ENCODE measurements at regions of chr9 and their contacts with region 1.

Region 1: DNA sequence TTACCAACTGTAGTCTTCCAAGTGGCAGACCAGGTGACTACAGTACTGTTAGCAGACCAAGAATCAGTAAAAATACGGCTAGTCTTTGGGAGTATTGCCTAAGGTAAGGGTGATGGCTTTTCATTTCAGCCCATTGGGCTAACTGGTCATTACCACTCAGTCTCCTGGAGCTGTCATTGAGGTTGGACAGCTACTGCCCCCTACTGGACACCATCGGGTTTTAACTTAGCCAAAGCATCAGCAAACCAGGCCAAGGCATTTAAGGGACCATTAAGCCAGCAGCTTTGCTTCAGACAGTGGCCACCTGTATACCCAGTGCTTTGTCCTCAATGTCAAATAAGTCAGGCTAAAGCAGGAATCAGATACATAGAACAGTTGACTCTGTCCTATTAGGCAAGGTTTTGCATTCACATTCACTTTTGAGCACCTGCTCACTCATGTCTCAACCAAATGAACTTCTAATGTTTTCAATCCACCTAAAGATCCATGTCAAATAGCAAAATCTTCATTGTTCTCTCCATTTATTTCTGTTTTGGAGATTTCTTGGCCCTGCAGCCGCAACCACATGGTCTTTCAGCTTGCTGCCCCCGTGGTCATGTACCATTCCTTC is 117.2 kb downstream of the INVS start:
- DNase-seq: peak; percentile 61
- H3K4me3 ChIP-seq: no peak overlapping the region
- H3K27ac ChIP-seq: no peak overlapping the region
- H3K4me1 ChIP-seq: no peaks in the 10 kb centered on the region
- H3K27me3 ChIP-seq: no peaks in the 10 kb centered on the region
- CTCF ChIP-seq: peak; percentile 72 to 76
- POLR2A ChIP-seq: no peak

Region 2: DNA sequence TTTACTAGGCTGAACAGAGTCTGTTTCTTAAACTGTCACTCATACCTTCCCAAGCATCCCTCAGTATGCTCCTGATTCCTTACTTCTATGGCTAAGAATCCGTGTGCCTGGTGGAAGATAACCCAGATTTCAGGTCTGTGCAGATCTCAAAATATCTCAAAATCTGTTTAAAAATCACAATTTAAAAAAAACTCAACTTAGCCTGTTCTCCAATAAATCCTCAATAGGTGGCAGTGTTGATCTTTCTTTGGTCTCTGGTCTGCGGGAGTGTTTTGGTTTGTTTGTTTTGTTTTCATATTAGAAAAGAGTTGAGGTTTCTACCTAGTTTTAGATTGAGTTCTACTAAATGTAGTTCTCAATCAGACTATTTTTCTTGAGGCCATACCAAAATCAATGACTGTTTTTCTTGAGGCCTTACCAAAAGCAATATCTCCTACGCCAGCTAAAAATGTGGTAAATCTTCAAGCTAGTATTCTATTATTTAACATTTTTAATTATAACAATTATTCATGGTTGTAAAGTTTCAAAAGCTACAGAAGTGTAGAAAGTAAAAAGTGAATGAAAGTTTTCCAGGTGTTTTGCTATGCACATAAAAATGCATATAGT is 1053.4 kb before region 1 on chr9:
- CTCF ChIA-PET with region 1: no interaction called
- POLR2A ChIA-PET with region 1: no interaction called
- dilution Hi-C with region 1: no loop called
- intact Hi-C with region 1: loop called (anchors 5 kb)
- DNase-seq: peak; percentile 62
- H3K4me3 ChIP-seq: no peak overlapping the region
- H3K27ac ChIP-seq: no peak overlapping the region
- H3K4me1 ChIP-seq: peaks cover 3% of the 10 kb centered on the region
- H3K27me3 ChIP-seq: peaks cover 2 to 7% of the 10 kb centered on the region in 2 experiments
- CTCF ChIP-seq: peak; percentile 43 to 44
- POLR2A ChIP-seq: no peak

Region 3: DNA sequence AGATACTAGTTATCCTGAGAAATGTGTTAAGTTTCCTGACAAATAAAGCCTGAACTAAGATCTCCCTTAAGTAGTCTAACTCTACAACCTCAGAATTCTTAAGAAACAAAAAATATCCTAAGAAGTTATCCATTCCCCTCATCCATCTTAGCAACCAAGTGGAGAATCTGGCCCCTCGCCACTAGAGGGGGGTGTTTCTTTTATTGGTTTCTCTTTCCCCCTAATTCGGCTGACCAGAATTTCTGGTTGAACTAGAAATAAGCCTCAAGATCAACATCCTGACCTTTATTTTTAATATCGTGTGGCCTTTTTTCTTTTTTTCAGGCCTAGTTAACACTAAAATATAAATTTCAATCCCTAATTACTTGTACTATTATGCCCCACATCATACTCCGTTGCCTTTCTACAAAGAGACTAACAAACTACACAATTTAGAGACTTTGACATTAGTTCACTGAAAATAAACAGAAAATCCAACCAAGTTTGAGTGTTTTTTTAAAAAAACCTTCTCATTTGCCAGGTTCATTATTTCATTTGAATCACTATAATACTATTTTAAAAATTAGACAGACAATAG is 408.9 kb before region 1 on chr9:
- CTCF ChIA-PET with region 1: no interaction called
- POLR2A ChIA-PET with region 1: no interaction called
- dilution Hi-C with region 1: no loop called
- intact Hi-C with region 1: loop called (anchors 2 kb)
- DNase-seq: peak; percentile 61
- H3K4me3 ChIP-seq: no peak overlapping the region
- H3K27ac ChIP-seq: no peak overlapping the region
- H3K4me1 ChIP-seq: no peaks in the 10 kb centered on the region
- H3K27me3 ChIP-seq: no peaks in the 10 kb centered on the region
- CTCF ChIP-seq: peak; percentile 70 to 72
- POLR2A ChIP-seq: no peak

Region 4: GRCh38 chr9:100134731-100135130 is 81.6 kb before region 1 on chr9:
- CTCF ChIA-PET with region 1: no interaction called
- POLR2A ChIA-PET with region 1: no interaction called
- dilution Hi-C with region 1: no loop called
- intact Hi-C with region 1: loop called (anchors 5 kb)
- DNase-seq: no peak
- H3K4me3 ChIP-seq: no peak overlapping the region
- H3K27ac ChIP-seq: no peak overlapping the region
- H3K4me1 ChIP-seq: no peaks in the 10 kb centered on the region
- H3K27me3 ChIP-seq: no peaks in the 10 kb centered on the region
- CTCF ChIP-seq: no peak
- POLR2A ChIP-seq: no peak

Region 5: DNA sequence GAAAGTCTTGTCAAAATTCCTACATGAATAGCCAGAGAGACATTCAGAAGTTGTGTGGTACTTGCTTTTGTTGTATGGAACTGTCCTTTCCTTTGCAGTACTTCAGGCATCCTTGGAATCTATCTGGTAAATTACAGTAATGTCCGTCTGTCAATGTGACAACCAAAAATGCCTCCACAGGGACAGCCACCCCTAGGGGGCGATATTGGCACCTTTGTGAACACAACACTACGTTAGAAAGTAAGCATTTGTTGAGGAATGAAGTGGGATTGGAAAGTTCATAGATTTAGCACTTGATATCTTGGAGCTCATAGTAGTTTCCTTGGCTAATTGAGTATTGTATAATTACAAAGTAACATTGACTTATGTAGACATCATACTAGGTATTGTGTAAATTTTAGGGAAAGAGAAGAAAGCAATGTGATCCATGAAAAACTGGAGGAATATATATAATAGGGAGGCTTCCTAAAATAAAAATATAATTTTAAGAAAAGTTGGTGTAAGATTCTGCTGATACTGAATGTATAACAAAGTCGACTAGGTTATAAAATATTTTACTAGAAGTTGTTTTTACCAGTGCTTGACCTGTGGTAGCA is 289.4 kb after region 1 on chr9:
- CTCF ChIA-PET with region 1: no interaction called
- POLR2A ChIA-PET with region 1: no interaction called
- dilution Hi-C with region 1: no loop called
- intact Hi-C with region 1: no loop called
- DNase-seq: peak; percentile 61
- H3K4me3 ChIP-seq: no peak overlapping the region
- H3K27ac ChIP-seq: no peak overlapping the region
- H3K4me1 ChIP-seq: peaks cover 8% of the 10 kb centered on the region
- H3K27me3 ChIP-seq: no peaks in the 10 kb centered on the region
- CTCF ChIP-seq: peak; percentile 65 to 78
- POLR2A ChIP-seq: no peak

Region 6: DNA sequence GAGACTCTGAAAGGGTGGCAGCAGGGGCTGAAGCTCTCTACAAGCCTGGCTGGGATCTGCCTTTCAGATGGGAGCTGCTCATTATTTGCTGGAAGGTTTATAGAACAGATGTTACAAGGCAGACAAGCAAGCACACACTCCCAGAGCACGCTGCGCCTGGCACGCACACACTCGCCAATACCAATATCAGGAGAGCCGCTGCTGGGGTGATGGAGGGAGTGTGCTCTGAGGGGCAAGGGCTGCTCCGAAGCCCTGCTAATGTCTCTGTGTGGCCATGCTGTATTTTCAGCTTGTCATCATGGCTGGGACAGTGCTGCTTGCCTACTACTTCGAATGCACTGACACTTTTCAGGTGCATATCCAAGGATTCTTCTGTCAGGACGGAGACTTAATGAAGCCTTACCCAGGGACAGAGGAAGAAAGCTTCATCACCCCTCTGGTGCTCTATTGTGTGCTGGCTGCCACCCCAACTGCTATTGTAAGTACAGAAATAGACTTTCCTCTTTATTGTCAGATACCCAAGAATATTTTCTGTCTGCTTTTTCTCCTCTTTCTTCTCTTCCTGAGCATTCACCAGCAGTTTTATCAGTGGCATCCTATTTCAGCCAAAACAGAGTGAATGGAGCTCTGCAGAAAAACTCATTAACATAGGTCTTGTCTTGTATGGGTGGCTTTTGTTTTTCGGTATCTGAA is 1053.5 kb after region 1 on chr9:
- CTCF ChIA-PET with region 1: no interaction called
- POLR2A ChIA-PET with region 1: no interaction called
- dilution Hi-C with region 1: no loop called
- intact Hi-C with region 1: no loop called
- DNase-seq: no peak
- H3K4me3 ChIP-seq: no peak overlapping the region
- H3K27ac ChIP-seq: no peak overlapping the region
- H3K4me1 ChIP-seq: no peaks in the 10 kb centered on the region
- H3K27me3 ChIP-seq: no peaks in the 10 kb centered on the region
- CTCF ChIP-seq: no peak
- POLR2A ChIP-seq: no peak